B cell (primary cell): ENCODE measurements at regions of chr22 and their contacts with region 1.

Region 1: DNA sequence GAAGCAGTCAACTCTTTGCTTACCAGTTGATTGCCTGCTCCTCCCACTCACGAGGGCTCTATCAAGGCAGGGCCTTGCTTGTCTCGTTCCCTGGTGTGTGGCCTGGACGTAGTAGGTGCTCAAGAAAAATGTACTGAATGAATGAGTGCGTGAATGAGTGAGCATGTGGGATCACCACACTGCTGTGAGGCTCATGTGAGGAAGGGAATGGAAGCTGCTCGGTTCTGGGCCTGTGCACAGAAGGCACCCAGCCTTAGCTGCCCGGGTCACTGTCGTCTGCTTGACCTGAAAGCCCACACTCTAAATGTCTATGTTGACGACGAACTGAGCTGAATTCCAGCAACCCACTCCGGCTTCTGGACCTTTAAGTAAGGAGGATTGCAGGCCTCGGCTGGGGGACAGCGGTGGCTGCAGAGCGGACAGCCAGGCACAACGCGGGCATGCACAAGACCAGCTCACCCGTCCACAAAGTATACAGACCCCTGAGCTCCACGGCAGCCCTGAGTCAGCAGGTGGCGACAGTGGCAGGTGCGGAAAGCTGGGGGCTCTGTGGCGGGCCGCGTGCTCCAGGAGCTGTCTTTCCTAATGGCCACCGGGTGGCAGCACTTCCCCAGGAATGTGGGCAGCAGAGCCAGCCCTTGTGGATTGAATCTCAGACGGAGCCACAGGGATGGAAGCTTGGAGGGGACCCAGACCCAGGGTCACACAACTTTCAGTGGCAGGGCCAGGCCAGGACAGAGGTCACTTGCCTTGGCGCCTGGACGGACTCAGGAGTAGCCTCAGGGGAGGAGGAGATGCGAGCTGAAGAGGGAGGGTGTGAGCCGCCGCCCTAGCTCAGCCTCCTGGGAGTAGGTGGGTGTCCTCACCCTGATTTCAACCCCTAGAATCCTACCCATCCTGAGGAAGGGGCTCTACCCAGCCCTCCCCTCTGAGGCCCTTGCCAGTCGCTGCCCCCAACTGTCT is 5.0 kb upstream of the PICK1 start:
- DNase-seq: peak; percentile 90
- ATAC-seq: peak; percentile 87
- H3K4me3 ChIP-seq: no peak overlapping the region
- H3K4me3 Mint-ChIP-seq: peak overlapping the region; percentile 26
- H3K27ac ChIP-seq: no peak overlapping the region
- H3K27ac Mint-ChIP-seq: no peak overlapping the region
- H3K4me1 ChIP-seq: peaks cover 6 to 20% of the 10 kb centered on the region in 2 donors
- H3K4me1 Mint-ChIP-seq: peaks cover 13% of the 10 kb centered on the region
- H3K27me3 ChIP-seq: peaks cover 0 to 14% (median 2%) of the 10 kb centered on the region in 4 experiments
- H3K27me3 Mint-ChIP-seq: peaks cover 4% of the 10 kb centered on the region
- CTCF ChIP-seq: peak; percentile 88

Region 2: DNA sequence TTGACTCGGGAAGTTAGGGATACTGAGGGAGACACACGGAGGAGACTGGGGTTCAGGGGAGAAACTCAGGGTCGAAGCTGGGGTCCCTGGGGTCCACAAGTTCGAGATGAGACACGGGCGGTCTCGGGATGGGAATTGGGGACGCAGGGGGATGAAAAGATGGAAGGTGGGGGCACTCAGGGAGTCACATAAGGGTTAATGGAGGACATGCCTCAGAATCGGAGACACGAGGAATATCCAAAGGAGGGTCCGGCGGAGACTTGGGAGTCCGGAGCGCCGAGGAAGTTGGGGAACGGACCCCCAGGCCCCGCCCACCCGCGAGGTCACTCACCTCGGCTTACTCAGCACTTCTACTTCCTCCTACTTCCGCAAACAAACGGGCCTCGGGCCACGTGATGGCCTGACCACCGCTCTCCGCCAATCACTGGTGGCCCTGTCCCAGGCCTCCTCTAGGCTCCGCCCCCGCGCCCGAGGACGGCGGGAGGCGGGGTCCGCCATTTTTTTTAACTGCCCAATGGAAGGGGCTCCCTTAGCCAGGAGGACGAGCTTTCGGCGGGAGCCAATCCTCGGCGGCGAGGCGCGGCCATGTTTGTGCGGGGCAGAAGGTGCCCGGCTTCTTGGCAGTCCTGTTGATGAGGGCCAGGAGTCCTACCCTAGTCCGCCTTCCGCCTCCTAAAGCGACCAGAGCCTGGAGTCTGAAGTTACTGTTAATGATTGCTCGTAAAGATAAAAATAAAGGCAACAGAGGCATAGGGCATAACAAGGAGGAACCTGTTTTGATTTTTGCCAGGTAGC is 129.5 kb after region 1 on chr22 and contains the start of gene PLA2G6:
- CTCF ChIA-PET with region 1: interaction called, 3 read pairs
- POLR2A ChIA-PET with region 1: no interaction called
- intact Hi-C with region 1: loop called (anchors 10 kb)
- DNase-seq: peak; percentile 98
- ATAC-seq: peak; percentile 96
- H3K4me3 ChIP-seq: peak within 1 kb of the TSS; percentile 73 to 88 (median 79)
- H3K4me3 Mint-ChIP-seq: peak within 1 kb of the TSS; percentile 89
- H3K27ac ChIP-seq: peak within 1 kb of the TSS; percentile 64 to 67
- H3K27ac Mint-ChIP-seq: peak within 1 kb of the TSS; percentile 93
- H3K4me1 ChIP-seq: peaks cover 23 to 28% of the 10 kb centered on the region in 2 donors
- H3K4me1 Mint-ChIP-seq: peaks cover 35% of the 10 kb centered on the region
- H3K27me3 ChIP-seq: no peaks in the 10 kb centered on the region
- H3K27me3 Mint-ChIP-seq: peaks cover 7% of the 10 kb centered on the region
- CTCF ChIP-seq: no peak
- total RNA-seq, gene PLA2G6: 125 and 128 TPM in 2 replicates

Region 3: DNA sequence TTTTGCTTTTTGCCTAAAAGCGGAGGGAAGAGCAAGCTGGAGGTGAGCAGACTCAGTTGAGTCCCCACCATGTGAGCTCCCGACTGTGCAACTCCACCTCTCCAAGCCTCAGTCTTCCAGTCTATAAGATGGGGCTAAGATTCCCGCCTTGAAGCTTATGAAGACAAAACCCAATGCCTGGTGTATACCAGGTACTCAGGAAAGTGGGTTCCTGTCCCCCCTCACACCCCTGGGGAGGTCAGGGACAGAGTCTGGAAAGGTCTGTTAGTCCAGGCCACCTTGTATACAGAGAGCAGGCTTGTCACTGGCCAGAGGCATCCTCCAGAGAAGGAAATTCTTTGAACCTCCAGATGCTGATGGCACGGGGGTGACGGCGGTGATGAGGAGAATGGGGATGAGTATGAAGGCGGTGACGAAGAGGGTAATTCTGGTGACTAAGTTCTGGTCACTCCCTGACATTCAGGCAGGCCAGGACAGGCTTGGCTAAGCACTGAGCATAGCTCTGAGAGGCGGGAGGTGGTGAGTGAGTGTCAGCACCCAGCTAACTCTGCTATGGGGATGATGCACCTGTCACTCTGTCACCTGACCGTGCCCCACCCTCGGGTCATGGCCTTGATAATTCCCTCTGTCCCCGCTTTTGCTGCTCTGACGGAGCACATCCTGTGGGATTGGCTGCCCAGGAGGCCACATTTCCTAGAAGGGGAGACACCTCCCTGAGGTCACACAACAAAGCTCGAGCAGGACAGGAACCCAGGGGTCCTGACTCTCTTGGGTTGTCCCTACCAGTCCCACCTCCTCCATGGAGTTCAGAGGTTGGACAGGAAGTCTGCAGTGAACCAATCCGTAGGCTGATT is 295.9 kb after region 1 on chr22:
- CTCF ChIA-PET with region 1: interaction called, 32 read pairs
- POLR2A ChIA-PET with region 1: no interaction called
- intact Hi-C with region 1: loop called (anchors 1 kb)
- DNase-seq: no peak
- ATAC-seq: no peak
- H3K4me3 ChIP-seq: no peak overlapping the region
- H3K4me3 Mint-ChIP-seq: no peak overlapping the region
- H3K27ac ChIP-seq: no peak overlapping the region
- H3K27ac Mint-ChIP-seq: peak overlapping the region; percentile 37
- H3K4me1 ChIP-seq: peaks cover 0 to 5% of the 10 kb centered on the region in 2 donors
- H3K4me1 Mint-ChIP-seq: peaks cover 21% of the 10 kb centered on the region
- H3K27me3 ChIP-seq: peaks cover 0 to 3% (median 0%) of the 10 kb centered on the region in 4 experiments
- H3K27me3 Mint-ChIP-seq: no peaks in the 10 kb centered on the region
- CTCF ChIP-seq: no peak

Region 4: DNA sequence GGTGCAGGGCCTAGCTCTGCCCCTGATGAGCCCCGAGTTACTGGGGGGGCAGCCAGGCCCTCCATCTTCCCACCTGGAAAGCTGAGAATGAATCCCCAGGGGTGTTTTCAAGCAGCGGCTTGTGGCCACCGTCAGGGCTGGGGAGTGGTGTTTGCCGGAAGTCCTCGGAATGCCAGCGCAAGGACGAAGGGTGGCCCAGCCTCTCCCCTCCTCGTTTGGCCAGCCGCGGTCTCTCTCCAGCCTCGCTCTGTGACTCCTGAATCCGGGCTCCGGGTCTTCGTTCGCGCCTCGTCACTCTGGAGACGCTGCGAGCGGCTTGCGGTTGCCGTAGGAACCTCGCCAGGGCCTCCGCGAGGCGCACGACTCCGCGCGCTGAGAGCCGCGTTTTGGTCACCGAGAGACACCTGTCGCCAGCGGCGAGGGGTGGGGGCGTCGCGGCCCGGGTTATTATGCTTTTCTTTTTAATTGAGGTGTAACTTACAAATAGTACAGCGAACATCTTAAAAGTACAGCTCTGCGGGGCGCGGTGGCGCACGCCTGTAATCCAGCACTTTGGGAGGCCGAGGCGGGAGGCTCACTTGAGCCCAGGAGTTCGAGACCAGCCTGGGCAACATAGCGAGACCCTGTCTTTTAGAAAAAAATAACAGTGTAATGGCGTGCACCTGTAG is 409.4 kb after region 1 on chr22:
- CTCF ChIA-PET with region 1: no interaction called
- POLR2A ChIA-PET with region 1: interaction called, 15 read pairs
- intact Hi-C with region 1: no loop called
- DNase-seq: peak; percentile 58
- ATAC-seq: peak; percentile 53
- H3K4me3 ChIP-seq: no peak overlapping the region
- H3K4me3 Mint-ChIP-seq: no peak overlapping the region
- H3K27ac ChIP-seq: no peak overlapping the region
- H3K27ac Mint-ChIP-seq: no peak overlapping the region
- H3K4me1 ChIP-seq: peaks cover 11 to 18% of the 10 kb centered on the region in 2 donors
- H3K4me1 Mint-ChIP-seq: peaks cover 13% of the 10 kb centered on the region
- H3K27me3 ChIP-seq: peaks cover 0 to 75% (median 34%) of the 10 kb centered on the region in 4 experiments
- H3K27me3 Mint-ChIP-seq: peaks cover 62% of the 10 kb centered on the region
- CTCF ChIP-seq: no peak

Region 5: GRCh38 chr22:38681784-38682335 is 629.7 kb after region 1 on chr22 and contains the start of gene TOMM22:
- CTCF ChIA-PET with region 1: interaction called, 14 read pairs
- POLR2A ChIA-PET with region 1: no interaction called
- intact Hi-C with region 1: no loop called
- DNase-seq: peak; percentile 91
- ATAC-seq: peak; percentile 98
- H3K4me3 ChIP-seq: peak within 1 kb of the TSS; percentile 78 to 96 (median 87)
- H3K4me3 Mint-ChIP-seq: peak within 1 kb of the TSS; percentile 100
- H3K27ac ChIP-seq: peak within 1 kb of the TSS; percentile 70 to 88
- H3K27ac Mint-ChIP-seq: peak within 1 kb of the TSS; percentile 96
- H3K4me1 ChIP-seq: peaks cover 11 to 15% of the 10 kb centered on the region in 2 donors
- H3K4me1 Mint-ChIP-seq: peaks cover 22% of the 10 kb centered on the region
- H3K27me3 ChIP-seq: no peaks in the 10 kb centered on the region
- H3K27me3 Mint-ChIP-seq: no peaks in the 10 kb centered on the region
- CTCF ChIP-seq: peak; percentile 72
- total RNA-seq, gene TOMM22: 47.6 and 48.2 TPM in 2 replicates